CD4-positive, alpha-beta T cell (primary cell): ENCODE measurements at regions of chr21 and their contacts with region 1.

Region 1: GRCh38 chr21:33479679-33480480 is at the start of gene TMEM50B:
- DNase-seq: peak; percentile 91 to 99 (median 96)
- ATAC-seq: peak; percentile 89
- H3K4me3 ChIP-seq: peak within 1 kb of the TSS; percentile 88
- H3K4me3 Mint-ChIP-seq: peak within 1 kb of the TSS; percentile 89
- H3K27ac ChIP-seq: peak within 1 kb of the TSS; percentile 80 to 90
- H3K27ac Mint-ChIP-seq: peak within 1 kb of the TSS; percentile 96
- H3K4me1 ChIP-seq: peaks cover 22% of the 10 kb centered on the region
- H3K4me1 Mint-ChIP-seq: peaks cover 19% of the 10 kb centered on the region
- H3K27me3 ChIP-seq: no peaks in the 10 kb centered on the region
- H3K27me3 Mint-ChIP-seq: no peaks in the 10 kb centered on the region
- CTCF ChIP-seq: peak; percentile 0
- total RNA-seq, gene TMEM50B: 38.4 to 40.3 TPM

Region 2: DNA sequence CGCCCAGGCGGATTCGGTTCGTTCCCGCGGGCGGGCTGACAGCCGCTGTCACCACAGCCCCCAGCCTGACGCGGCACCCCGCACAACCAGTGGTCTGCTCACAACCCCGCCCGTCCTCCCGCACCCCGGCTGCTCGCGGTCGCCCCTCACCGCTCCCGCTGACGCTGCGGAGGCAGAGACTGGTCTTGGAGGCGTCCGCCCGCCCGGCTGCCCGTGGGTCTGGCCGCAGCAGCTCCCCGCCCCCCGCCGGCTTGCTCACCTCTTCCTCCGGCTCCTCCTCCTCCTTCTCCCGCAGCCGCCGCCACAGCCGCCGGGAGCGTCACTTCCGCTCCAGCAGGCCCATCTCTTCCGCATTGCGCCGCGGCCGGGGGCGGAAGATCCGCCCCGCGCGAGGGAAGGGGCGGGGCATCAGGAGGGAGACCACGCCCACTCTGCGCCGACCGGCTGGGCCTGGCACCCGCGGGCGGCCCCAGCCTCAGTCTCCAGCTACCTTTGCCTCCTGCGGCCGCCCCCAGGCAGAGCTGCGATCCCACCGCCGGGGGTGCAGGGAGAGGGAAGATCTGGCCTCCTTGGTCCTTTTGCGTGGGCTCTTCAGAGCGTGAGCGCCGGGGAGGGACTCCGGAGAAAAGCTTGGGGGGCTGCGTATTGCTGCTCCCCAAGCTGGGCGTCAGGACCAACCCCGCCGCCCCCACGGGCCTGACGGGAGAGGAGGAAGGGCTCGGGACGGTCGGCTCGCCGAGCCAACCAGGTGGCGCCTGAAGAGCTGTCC is 752.0 kb before region 1 on chr21 and contains the start of gene SYNJ1:
- CTCF ChIA-PET with region 1: no interaction called
- POLR2A ChIA-PET with region 1: interaction called, 12 read pairs
- intact Hi-C with region 1: loop called in 1 of 2 experiments (anchors 5 kb)
- DNase-seq: peak; percentile 85 to 97 (median 92)
- ATAC-seq: peak; percentile 85
- H3K4me3 ChIP-seq: peak within 1 kb of the TSS; percentile 95
- H3K4me3 Mint-ChIP-seq: peak within 1 kb of the TSS; percentile 97
- H3K27ac ChIP-seq: peak within 1 kb of the TSS; percentile 72 to 81
- H3K27ac Mint-ChIP-seq: peak within 1 kb of the TSS; percentile 90
- H3K4me1 ChIP-seq: peaks cover 27% of the 10 kb centered on the region
- H3K4me1 Mint-ChIP-seq: peaks cover 75% of the 10 kb centered on the region
- H3K27me3 ChIP-seq: no peaks in the 10 kb centered on the region
- H3K27me3 Mint-ChIP-seq: no peaks in the 10 kb centered on the region
- CTCF ChIP-seq: no peak
- total RNA-seq, gene SYNJ1: 14.3 to 15.6 TPM

Region 3: GRCh38 chr21:33491373-33492102 is 11.7 kb after region 1 on chr21 and contains the start of gene DNAJC28:
- CTCF ChIA-PET with region 1: interaction called, 46 read pairs
- POLR2A ChIA-PET with region 1: interaction called, 197 read pairs
- intact Hi-C with region 1: loop called (anchors 1 kb)
- DNase-seq: peak; percentile 89 to 96 (median 92)
- ATAC-seq: peak; percentile 96
- H3K4me3 ChIP-seq: peak within 1 kb of the TSS; percentile 73
- H3K4me3 Mint-ChIP-seq: peak within 1 kb of the TSS; percentile 94
- H3K27ac ChIP-seq: peak within 1 kb of the TSS; percentile 39 to 63
- H3K27ac Mint-ChIP-seq: peak within 1 kb of the TSS; percentile 85
- H3K4me1 ChIP-seq: peaks cover 14% of the 10 kb centered on the region
- H3K4me1 Mint-ChIP-seq: peaks cover 13% of the 10 kb centered on the region
- H3K27me3 ChIP-seq: no peaks in the 10 kb centered on the region
- H3K27me3 Mint-ChIP-seq: no peaks in the 10 kb centered on the region
- CTCF ChIP-seq: no peak
- total RNA-seq, gene DNAJC28: not detected

Region 4: DNA sequence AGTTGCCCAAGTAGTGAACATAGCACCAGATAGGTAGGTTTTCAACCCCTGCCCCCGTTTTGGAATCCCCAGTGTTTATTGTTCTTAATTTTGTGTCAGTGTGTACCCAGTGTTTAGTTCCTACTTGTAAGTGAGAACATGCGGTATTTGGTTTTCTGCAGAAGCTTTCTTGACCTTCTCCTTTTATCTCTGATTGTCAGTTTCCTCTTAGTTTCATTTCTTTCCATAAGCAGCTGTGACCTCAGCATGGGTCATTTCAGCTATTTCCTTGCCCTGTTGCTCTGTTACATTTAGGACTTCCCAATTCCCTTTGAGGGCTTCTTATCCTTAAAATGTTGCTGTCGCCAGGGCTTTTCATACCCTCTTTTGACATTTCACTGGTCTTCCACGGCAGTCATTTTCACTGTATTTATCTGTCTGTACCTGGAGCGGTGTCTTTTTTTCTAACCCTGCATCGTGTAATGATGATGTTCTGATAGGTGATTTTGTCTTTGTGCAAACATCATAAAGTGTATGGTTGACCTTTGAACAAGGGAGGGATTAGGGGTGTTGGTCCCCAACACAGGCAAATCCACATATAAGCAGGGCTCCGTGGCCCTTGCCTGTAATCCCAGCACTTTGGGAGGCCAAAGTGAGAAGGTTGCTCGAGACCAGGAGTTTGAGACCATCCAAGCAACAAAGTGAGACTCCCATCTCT is 177.4 kb after region 1 on chr21:
- CTCF ChIA-PET with region 1: no interaction called
- POLR2A ChIA-PET with region 1: no interaction called
- intact Hi-C with region 1: no loop called
- DNase-seq: no peak
- ATAC-seq: no peak
- H3K4me3 ChIP-seq: no peak overlapping the region
- H3K4me3 Mint-ChIP-seq: no peak overlapping the region
- H3K27ac ChIP-seq: no peak overlapping the region
- H3K27ac Mint-ChIP-seq: no peak overlapping the region
- H3K4me1 ChIP-seq: no peaks in the 10 kb centered on the region
- H3K4me1 Mint-ChIP-seq: no peaks in the 10 kb centered on the region
- H3K27me3 ChIP-seq: no peaks in the 10 kb centered on the region
- H3K27me3 Mint-ChIP-seq: no peaks in the 10 kb centered on the region
- CTCF ChIP-seq: no peak